OCI-LY7 (cell line): ENCODE measurements at regions of chr14 and their contacts with region 1.

Region 1: DNA sequence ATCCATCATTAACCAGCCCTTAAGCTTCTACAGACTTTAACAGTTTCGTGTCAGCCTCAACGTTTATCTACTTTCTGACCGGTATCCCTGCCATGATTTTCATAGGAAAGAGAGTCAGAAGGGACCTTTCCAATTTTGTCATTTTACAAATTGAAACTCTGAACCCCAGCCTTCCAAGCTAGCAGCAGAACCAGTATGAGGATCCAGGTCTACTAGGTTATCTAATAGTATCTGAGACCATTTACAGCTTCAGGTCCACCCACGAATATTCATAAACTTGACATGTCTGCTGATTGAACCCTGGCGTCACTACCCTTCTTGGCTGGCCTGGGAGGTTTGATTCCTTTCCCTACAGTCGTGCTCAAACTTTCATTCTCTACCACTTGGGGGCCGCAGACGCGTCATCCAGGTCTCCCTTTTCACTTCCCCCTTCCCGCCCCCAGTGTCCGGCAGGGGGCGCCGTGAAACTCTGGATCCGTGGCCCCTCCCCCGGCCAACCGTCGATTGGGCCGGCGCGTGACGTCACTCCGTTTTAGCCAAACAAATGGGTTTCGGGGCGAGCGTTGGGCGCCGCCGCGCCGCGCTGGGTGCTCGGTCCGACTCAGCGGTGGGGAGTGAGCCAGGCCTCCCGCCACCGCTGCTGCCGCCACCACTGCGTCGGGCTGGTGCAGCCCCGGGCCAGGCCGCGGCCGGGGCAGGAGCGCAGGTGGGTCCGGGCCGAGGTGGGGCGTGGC is at the start of gene FBXO34:
- DNase-seq: peak; percentile 98
- H3K4me3 ChIP-seq: peak within 1 kb of the TSS; percentile 93
- H3K27ac ChIP-seq: peak within 1 kb of the TSS; percentile 58
- H3K4me1 ChIP-seq: peaks cover 37% of the 10 kb centered on the region
- CTCF ChIP-seq: peak; percentile 98
- total RNA-seq, gene FBXO34: 26.3 and 28.3 TPM in 2 replicates

Region 2: DNA sequence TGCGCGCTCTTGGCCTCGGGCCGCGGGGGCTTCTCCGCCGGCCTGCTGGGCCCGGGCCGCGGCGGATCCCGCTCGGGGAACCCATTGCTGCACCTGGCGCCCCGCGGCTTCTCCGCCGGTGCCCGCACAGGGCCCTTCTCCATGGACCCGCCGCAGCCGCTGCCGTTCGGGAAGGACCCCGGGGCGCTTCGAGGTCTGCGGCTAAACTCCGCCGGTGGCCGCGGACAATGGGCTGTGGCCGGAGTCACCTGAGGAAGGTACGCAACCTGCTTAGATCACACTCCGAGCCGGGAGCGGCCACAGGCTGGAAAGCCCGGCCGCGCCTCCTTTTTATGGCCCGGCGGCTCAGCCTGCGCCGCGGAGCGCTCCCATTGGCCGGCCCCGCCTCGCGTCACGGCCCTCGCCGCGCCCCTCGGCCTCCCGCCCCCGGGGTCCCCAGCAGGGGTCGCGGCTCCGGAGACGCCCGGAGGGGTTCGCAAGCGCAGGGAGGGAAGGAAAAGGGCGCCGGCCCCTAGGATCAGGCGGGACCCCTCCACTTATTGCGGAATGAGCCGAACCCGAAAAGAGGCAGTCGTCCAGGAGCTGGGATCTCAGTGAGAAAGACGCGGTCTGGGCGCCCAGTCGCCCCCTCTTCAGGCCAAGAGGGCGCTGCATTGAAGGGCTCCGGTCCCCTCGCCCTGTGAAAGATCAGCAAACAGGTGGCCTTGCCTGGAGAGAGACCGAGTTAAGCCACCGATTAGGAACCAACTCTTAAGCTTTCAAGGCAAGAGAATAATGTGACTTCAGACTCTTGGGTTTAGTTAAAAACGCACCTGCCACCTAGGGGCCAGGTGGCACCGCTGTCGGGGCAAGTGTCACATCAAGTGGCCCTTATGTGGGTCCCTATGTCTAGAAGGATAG is 368.2 kb before region 1 on chr14 and contains the start of gene GCH1:
- CTCF ChIA-PET with region 1: no interaction called
- POLR2A ChIA-PET with region 1: no interaction called
- intact Hi-C with region 1: loop called (anchors 5 kb)
- DNase-seq: peak; percentile 86
- H3K4me3 ChIP-seq: peak within 1 kb of the TSS; percentile 87
- H3K27ac ChIP-seq: peak within 1 kb of the TSS; percentile 46
- H3K4me1 ChIP-seq: peaks cover 8% of the 10 kb centered on the region
- CTCF ChIP-seq: peak; percentile 82
- total RNA-seq, gene GCH1: 13.8 and 14.7 TPM in 2 replicates

Region 3: DNA sequence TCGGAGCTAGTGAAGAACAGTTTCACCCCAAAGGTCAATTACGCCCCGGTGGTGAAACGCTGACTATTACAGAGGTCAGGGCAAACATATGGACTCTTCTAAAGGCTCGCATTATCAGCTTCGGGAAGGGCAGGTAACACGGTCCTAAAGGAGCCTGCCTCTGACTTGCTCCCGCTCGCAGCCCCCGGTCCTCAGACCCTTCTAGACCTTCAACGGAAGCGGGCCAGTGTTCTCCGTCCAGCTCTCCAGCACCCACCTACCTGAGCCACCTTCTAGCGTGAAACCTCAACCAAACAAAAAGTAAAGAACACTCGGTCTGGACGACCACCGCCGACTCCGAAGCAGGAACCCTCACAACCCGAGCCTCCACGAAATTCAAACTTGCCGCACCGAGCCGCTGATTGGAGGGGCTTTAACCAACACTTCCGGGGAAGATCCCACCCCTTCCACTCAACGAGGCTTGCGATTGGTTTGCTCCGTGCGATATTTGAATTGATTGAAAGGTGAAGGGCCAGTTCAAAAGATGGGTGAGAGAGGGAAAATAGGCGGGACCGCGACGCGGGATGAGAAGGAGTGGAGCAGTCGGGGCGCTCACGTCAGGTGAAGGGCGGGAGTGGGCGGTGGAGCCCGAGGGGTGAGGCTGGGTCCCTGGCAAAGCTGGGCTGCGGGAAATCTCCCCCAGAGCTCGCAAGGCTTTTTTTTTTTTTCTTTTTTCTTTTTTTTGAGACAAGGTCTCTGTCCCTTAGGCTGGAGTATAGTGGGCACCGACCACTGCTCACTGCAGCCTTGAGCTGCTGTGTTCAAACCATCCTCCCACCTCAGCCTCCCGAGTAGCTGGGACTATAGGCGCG is 79.6 kb before region 1 on chr14 and contains the start of gene DLGAP5:
- CTCF ChIA-PET with region 1: no interaction called
- POLR2A ChIA-PET with region 1: interaction called, 3 read pairs
- intact Hi-C with region 1: loop called (anchors 5 kb)
- DNase-seq: peak; percentile 98
- H3K4me3 ChIP-seq: peak within 1 kb of the TSS; percentile 75
- H3K27ac ChIP-seq: peak within 1 kb of the TSS; percentile 69
- H3K4me1 ChIP-seq: peaks cover 24% of the 10 kb centered on the region
- CTCF ChIP-seq: no peak
- total RNA-seq, gene DLGAP5: 57.6 and 59.2 TPM in 2 replicates

Region 4: GRCh38 chr14:55354500-55354899 is 83.5 kb after region 1 on chr14:
- CTCF ChIA-PET with region 1: interaction called, 5 read pairs
- POLR2A ChIA-PET with region 1: interaction called, 10 read pairs
- intact Hi-C with region 1: loop called (anchors 1 kb)
- DNase-seq: peak; percentile 68
- H3K4me3 ChIP-seq: no peak overlapping the region
- H3K27ac ChIP-seq: no peak overlapping the region
- H3K4me1 ChIP-seq: peaks cover 5% of the 10 kb centered on the region
- CTCF ChIP-seq: peak; percentile 82

Region 5: GRCh38 chr14:55579724-55580469 is 308.9 kb after region 1 on chr14 and contains the start of gene KTN1:
- CTCF ChIA-PET with region 1: no interaction called
- POLR2A ChIA-PET with region 1: interaction called, 3 read pairs
- intact Hi-C with region 1: loop called (anchors 5 kb)
- DNase-seq: peak; percentile 89
- H3K4me3 ChIP-seq: peak within 1 kb of the TSS; percentile 94
- H3K27ac ChIP-seq: peak within 1 kb of the TSS; percentile 69
- H3K4me1 ChIP-seq: peaks cover 38% of the 10 kb centered on the region
- CTCF ChIP-seq: no peak
- total RNA-seq, gene KTN1: 60.6 and 90.0 TPM in 2 replicates